GM10248 (cell line): ENCODE measurements at regions of chr14 and their contacts with region 1.

Region 1: DNA sequence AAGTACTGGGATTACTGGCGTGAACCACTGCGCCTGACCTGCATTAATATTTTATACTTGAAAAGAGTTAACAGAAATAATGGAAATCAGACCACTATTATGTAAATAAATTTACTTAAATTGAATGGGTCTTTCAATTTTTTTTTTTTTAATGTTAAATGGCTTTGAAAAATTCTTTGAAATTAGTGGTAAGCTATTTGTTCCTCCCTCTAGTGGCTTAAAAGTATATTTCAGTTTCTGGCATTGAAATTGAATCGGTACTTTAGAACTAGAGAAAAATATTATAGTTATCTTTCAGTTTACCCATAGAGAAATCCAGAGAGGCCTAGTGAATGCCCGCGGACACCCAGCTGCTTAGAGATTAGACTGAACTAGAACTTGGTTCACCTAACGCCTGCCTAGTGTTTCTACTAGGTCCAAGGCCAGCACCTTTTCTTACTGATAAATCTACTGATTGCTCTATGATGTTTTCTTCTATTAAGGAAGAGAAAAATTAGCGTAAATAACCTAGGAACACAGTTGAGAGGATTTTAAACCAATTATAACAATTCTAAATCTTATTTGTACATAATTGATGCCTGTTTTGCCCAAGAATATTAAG is 106.5 kb downstream of the EML1 start:
- DNase-seq: no peak
- CTCF ChIP-seq: peak; percentile 50

Region 2: DNA sequence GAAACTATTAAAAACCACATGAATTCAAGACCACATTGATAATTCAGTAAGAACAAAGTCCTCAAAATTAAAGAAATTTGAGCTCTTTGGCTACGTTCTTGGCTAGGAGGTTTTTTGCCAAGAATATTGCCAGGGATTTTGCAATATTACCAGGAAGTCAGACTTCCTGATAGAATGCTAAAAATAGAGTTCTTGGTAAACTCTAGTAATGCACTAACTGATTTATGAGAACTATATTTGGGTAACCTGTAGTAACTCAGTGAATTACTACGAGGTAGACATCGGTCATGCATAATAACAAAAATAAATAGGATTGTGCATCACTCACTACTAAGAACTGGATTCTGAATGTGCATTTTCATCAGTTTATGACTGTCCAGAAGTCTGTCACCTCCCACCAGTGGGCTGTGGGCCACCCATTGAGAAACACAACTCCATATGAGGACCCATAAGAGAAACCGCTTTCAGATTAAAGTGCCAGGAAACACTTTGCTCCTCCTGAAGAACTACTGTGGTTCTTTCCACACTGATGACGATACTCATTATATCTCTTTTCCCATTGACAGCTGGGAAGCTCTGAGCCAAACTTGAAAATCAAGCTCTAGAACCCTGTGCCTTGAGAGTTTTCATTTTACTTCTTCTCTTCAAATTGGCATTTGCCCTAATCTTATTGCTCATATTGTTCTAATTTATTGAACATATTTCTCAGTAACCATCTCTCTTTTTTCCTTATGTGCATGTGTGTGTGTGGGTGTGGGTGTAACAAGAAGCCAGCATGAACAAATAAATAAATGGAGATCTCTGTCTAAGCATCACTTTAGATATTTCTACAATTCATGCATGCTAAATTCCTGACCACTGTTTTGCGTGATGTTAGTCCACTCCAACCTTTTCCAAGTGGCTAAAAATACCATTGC is 744.2 kb before region 1 on chr14:
- CTCF ChIA-PET with region 1: no interaction called
- POLR2A ChIA-PET with region 1: no interaction called
- DNase-seq: no peak
- CTCF ChIP-seq: no peak

Region 3: DNA sequence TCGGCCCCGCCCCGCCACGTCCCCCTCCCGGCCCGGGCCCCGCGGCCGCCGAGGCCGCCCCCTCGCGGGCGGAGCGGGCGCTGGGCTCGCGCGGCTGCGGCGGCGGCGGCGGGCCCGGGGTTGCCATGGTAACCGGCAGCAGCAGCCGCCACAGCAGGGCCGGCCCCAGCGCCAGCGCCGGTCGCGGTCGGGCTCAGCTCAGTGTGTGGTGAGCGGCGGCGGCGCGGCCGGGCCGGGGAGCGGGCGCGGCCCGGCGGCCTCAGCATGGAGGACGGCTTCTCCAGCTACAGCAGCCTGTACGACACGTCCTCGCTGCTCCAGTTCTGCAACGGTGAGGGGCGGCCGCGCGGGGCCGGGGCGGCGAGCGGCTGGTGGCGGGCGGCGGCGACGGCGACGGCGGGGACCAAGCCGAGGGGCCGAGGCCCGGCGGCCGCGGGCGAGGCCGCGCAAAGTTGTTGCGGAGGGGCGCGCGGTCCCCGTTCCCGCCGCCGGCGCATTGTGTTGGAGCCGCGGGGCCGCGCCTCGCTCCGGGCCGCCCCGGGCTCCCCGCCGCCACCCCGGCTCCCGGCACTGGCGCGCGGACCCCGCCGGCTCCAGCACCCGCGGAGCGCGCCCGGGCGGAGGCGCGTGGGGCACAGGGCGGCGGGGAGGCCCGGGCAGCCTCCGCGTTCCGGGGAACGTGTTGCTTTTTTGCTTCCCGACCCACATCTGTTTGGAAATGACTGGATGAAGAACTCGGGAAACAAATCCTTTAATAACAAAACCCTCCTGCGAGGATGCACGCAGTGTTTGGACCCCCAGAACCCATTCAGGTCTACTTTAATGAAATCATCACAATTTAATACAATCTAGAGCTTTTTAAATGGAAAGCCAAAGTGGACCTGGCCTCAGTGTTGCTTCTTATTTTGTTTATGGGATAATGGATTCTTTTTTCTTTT is 106.2 kb before region 1 on chr14 and contains the start of gene EML1:
- CTCF ChIA-PET with region 1: no interaction called
- POLR2A ChIA-PET with region 1: no interaction called
- DNase-seq: peak; percentile 94
- CTCF ChIP-seq: peak; percentile 47

Region 4: DNA sequence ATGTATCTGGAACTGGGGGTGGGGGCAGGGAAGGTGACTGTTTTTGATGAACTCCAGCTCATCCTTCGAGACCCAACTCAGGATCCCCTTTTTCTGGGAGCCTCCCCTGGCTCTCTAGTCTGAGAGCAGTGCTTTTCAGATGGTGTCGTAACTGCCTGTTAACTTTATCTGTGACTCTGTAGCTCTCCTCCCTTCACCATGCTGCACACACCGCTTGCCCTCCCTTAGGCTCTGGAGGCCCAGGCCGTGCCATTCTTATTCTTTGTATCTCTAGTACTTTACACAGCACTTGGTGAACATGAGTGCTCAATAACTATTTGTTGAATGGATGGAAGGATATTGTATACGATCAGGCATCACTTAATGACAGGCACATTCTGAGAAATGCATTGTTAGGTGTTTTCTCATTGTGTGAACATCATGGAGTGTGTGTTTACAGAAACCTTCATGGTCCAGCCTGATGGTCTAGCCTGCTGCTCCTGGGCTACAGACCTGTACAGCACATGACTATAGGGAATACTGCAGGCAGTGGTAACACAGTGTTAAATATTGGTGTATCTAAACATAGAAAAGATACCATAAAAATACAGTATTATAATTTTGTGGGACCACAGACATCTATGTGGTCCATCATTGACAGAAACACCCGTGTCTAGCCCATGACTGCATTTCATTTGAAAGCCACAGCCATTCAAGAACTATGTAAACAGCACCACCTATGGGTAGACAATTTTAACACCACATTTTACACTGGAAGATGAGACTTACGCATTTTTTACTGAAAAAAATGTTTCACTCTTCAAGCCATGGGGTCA is 14.6 kb before region 1 on chr14:
- CTCF ChIA-PET with region 1: interaction called, 29 read pairs
- POLR2A ChIA-PET with region 1: no interaction called
- DNase-seq: peak; percentile 60
- CTCF ChIP-seq: peak; percentile 65

Region 5: DNA sequence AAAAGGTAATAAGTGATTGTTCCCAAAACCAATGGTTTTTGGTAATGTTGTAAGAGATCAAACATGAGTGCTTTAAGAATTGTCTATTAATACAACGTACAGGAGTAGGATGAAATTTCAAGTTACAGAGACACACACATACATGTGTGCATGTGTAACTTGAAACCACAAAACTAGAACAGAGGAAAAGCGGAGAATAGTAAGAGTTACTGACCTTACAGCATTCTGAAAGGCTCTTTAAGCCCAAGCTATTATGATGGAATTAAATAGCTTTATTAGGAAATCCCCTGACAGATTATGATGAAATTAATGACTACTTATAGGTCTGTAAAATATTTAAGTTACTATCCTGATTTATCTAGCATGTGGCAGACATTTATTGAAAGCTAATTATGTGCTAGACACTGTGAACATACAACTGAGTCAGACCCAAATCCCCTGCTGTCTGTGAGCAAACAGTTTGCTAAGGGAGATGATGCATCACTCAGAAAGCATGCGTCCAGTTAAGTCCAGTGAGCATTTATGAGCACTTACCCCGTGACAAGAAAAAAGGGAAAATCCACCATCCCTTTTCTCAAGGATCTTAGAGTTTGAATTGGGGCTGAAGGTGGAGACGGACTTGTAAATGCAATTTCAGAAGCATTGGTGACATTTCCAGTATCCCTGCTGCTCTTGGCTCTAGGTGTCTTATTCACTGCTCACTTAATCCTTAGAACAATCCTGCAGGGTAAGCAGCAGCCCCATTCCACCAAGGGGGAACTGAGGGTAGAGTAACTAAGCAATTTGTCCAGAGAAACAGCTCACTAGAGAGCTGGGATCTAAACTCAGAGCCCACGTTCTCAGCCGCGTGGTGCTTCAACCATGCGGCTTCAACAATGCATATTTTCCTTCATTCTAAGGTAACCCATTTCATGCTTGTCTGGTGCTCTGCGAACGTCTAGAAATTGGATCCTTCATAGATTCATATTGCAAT is 10.9 kb after region 1 on chr14:
- CTCF ChIA-PET with region 1: interaction called, 16 read pairs
- POLR2A ChIA-PET with region 1: no interaction called
- DNase-seq: no peak
- CTCF ChIP-seq: no peak